OCI-LY7 (cell line): ENCODE measurements at regions of chr11 and their contacts with region 1.

Region 1: GRCh38 chr11:60951899-60952741 is at the start of gene SLC15A3:
- DNase-seq: peak; percentile 86
- H3K4me3 ChIP-seq: peak within 1 kb of the TSS; percentile 64
- H3K27ac ChIP-seq: peak within 1 kb of the TSS; percentile 47
- H3K4me1 ChIP-seq: peaks cover 36% of the 10 kb centered on the region
- CTCF ChIP-seq: no peak
- total RNA-seq, gene SLC15A3: 7.2 and 12.6 TPM in 2 replicates

Region 2: GRCh38 chr11:60899046-60899936 is 52.8 kb before region 1 on chr11:
- CTCF ChIA-PET with region 1: interaction called, 3 read pairs
- POLR2A ChIA-PET with region 1: interaction called, 3 read pairs
- intact Hi-C with region 1: loop called (anchors 10 kb)
- DNase-seq: peak; percentile 51
- H3K4me3 ChIP-seq: no peak overlapping the region
- H3K27ac ChIP-seq: no peak overlapping the region
- H3K4me1 ChIP-seq: peaks cover 2% of the 10 kb centered on the region
- CTCF ChIP-seq: peak; percentile 99

Region 3: GRCh38 chr11:60932605-60933356 is 19.3 kb before region 1 on chr11:
- CTCF ChIA-PET with region 1: no interaction called
- POLR2A ChIA-PET with region 1: interaction called, 10 read pairs
- intact Hi-C with region 1: no loop called
- DNase-seq: peak; percentile 82
- H3K4me3 ChIP-seq: peak overlapping the region; percentile 22
- H3K27ac ChIP-seq: peak overlapping the region; percentile 75
- H3K4me1 ChIP-seq: peaks cover 29% of the 10 kb centered on the region
- CTCF ChIP-seq: no peak

Region 4: GRCh38 chr11:61041755-61042518 is 89.8 kb after region 1 on chr11:
- CTCF ChIA-PET with region 1: no interaction called
- POLR2A ChIA-PET with region 1: no interaction called
- intact Hi-C with region 1: no loop called
- DNase-seq: peak; percentile 76
- H3K4me3 ChIP-seq: peak overlapping the region; percentile 4
- H3K27ac ChIP-seq: no peak overlapping the region
- H3K4me1 ChIP-seq: peaks cover 15% of the 10 kb centered on the region
- CTCF ChIP-seq: no peak

Region 5: GRCh38 chr11:61161190-61162091 is 209.3 kb after region 1 on chr11 and contains the start of gene VPS37C:
- CTCF ChIA-PET with region 1: no interaction called
- POLR2A ChIA-PET with region 1: interaction called, 5 read pairs
- intact Hi-C with region 1: loop called (anchors 1 kb)
- DNase-seq: peak; percentile 92
- H3K4me3 ChIP-seq: peak within 1 kb of the TSS; percentile 85
- H3K27ac ChIP-seq: peak within 1 kb of the TSS; percentile 82
- H3K4me1 ChIP-seq: peaks cover 28% of the 10 kb centered on the region
- CTCF ChIP-seq: no peak
- total RNA-seq, gene VPS37C: 10.2 and 10.3 TPM in 2 replicates

Region 6: DNA sequence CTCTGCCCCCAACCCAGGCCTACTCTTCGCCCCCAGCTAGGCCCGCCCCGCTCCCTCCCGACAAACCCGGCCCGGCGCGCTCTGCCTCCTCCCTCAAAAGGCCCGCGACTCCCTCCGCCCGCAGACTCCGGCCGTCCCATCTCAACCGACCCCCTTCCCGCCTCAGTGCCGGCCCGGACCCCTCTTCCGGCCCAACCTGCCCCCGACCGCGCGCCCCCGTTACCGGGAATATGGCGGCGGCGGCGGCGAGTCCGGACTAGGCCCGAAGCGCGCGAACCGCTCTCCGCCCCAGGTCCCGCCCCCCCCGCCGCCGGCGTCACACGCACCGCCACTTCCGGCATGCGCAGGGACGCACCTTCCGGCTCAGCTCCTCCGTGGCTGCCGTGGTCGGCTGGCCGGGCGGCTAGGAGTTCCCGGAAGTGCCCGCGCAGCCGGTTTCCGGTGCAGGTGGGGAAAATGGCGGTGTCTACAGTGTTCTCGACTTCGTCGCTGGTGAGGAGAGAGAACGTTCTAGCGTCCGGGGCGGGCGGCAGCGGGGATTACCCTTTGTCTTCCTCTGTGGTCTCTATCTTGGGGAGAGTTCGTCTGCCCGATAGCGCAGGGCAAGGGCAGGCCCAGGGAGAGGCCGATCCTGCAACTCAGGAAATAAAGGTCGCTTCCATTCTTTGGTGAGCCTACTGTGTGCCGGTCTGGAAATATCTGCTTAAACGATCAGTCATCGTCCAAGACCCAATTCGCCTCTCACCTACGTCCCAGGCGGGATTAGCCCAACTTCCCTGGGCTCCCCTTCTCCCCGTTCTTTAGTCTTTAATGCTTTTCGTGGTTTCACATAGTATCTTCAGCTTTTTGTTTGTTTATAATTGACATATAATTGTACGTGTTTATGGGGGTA is 477.8 kb after region 1 on chr11 and contains the starts of genes CPSF7 and SDHAF2:
- CTCF ChIA-PET with region 1: no interaction called
- POLR2A ChIA-PET with region 1: no interaction called
- intact Hi-C with region 1: no loop called
- DNase-seq: peak; percentile 98
- H3K4me3 ChIP-seq: peak within 1 kb of the TSS; percentile 94
- H3K27ac ChIP-seq: peak within 1 kb of the TSS; percentile 89
- H3K4me1 ChIP-seq: peaks cover 37% of the 10 kb centered on the region
- CTCF ChIP-seq: no peak
- total RNA-seq, gene CPSF7: 56.1 and 69.4 TPM in 2 replicates
- total RNA-seq, gene SDHAF2: 40.6 and 41.2 TPM in 2 replicates